ENCODE measurements at regions of chr2 and their contacts with region 1.

Region 1: GRCh38 chr2:195636890-195637289 is 20.1 kb upstream of the SLC39A10 start:
- DNase-seq: no peak
- H3K4me3 ChIP-seq: no peak overlapping the region
- H3K27ac ChIP-seq: no peak overlapping the region
- H3K4me1 ChIP-seq: no peaks in the 10 kb centered on the region
- CTCF ChIP-seq: no peak

Region 2: DNA sequence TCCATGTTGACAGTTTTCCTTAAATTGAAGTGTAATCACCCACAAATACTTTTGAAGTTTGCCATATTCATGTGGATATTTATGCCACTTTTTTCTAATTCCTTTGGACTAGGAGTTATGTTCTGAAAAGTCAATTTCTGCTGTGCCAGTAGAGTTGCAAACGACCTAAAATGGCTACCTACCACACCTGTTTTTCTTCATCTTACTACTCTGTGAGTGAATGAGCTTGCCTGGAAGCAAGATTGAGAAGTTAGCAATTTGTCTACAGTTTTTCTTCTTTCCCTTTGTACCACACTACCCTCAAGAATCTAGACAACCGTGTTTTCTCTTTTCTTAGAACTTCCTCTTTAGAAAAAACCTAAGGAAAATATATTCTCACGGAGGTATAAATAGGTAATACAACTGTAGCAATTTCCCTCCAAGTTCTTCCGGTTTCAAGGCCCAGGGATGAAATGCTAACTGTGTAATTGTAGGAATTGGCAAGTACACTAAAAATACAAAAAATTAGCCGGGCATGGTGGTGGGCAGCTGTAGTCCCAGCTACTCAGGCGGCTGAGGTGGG is 12.8 kb after region 1 on chr2:
- CTCF ChIA-PET with region 1: no interaction called
- POLR2A ChIA-PET with region 1: interaction called, 14 read pairs
- intact Hi-C with region 1: no loop called
- DNase-seq: peak; percentile 50
- H3K4me3 ChIP-seq: peak overlapping the region; percentile 51
- H3K27ac ChIP-seq: peak overlapping the region; percentile 83
- H3K4me1 ChIP-seq: peaks cover 51% of the 10 kb centered on the region
- CTCF ChIP-seq: no peak

Measured in OCI-LY7 (cell line).